Vagina (tissue), 2 donors: ENCODE measurements at regions of chr1 and their contacts with region 1.

Region 1: DNA sequence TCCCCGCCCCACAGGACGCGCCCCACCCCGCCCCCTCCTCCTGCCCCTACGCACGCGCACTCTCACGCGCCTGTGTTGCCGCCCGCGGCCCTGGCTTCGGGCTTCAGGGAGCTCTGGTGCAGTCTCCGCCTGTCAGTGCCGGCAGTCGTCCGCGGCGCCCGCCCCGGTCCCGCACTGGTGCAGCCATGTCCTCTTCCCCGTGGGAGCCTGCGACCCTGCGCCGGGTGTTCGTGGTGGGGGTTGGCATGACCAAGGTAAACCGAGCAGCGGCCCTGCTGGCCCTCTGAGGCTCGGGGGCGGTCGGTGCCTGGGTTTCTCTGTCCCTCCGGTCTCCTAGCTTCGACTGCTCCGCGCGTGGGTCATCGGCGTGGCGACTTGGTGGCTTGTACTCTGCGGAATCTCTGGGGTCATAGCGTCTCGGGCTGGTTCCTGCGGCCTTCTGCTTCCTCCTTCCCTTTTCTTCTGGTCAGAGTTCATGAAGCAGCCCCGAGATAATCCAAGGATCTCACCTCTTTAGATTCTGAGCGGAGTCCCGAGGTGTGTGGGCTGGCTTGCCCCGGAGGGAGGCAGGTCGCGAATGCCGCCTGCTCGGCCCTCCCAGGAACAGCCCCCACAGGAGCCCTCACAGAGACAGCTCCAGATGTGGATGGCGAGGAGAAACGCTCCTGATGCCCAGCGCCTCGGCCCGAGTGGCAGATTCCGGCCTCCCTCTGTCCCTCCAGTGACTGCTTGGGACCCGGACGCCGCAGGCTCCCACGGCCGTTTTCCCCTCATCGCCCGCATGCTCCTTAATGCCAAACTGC is at the start of gene SCP2:
- DNase-seq: no peak
- H3K4me3 ChIP-seq: peak within 1 kb of the TSS; percentile 67 to 78
- H3K27ac ChIP-seq: peak within 1 kb of the TSS; percentile 70
- H3K4me1 ChIP-seq: peaks cover 20% of the 10 kb centered on the region
- H3K27me3 ChIP-seq: no peaks in the 10 kb centered on the region
- CTCF ChIP-seq: no peak
- POLR2A ChIP-seq: peak in 1 of 2 donors; percentile 66
- total RNA-seq, gene SCP2: 61.9 TPM

Region 2: GRCh38 chr1:52702886-52703787 is 224.3 kb before region 1 on chr1:
- intact Hi-C with region 1: loop called (anchors 5 kb)
- DNase-seq: peak; percentile 96
- H3K4me3 ChIP-seq: peak overlapping the region; percentile 53
- H3K27ac ChIP-seq: peak overlapping the region; percentile 67
- H3K4me1 ChIP-seq: peaks cover 7% of the 10 kb centered on the region
- H3K27me3 ChIP-seq: no peaks in the 10 kb centered on the region
- CTCF ChIP-seq: no peak
- POLR2A ChIP-seq: no peak

Region 3: DNA sequence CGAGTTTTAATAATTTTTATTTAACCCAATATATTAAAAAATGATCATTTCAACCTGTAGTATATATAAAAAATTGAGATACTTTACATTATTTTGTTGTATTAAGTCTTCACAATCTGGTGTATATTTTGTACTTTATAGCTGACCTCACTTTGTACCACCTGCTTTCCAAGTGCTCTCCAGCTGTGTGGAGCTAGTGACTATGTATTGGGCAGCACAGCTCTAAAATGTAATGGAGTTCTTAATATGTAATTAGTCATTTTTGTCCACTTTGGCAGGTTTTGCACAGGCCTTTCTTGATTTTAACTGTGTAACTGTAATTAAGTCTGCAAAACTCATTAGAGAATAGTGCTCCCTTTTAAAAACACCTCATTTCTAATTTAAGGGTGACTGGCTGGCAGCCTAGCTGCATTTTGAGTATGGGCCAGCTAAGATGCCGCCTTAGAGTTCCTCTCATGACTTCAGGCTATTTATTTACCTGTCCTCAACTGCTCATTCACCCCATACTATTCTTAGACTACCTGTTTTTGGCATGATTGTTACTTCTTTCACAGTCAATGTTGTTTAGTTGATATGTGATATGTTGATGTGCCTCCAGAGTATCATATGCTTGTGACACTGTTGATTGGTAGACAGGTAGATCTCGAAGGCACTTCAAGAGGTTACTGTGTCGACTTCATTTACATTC is 157.9 kb before region 1 on chr1:
- intact Hi-C with region 1: no loop called
- DNase-seq: no peak
- H3K4me3 ChIP-seq: no peak overlapping the region
- H3K27ac ChIP-seq: no peak overlapping the region
- H3K4me1 ChIP-seq: peaks cover 4% of the 10 kb centered on the region
- H3K27me3 ChIP-seq: no peaks in the 10 kb centered on the region
- CTCF ChIP-seq: no peak
- POLR2A ChIP-seq: no peak

Region 4: GRCh38 chr1:52892424-52893215 is 34.8 kb before region 1 on chr1:
- intact Hi-C with region 1: no loop called
- DNase-seq: no peak
- H3K4me3 ChIP-seq: no peak overlapping the region
- H3K27ac ChIP-seq: no peak overlapping the region
- H3K4me1 ChIP-seq: no peaks in the 10 kb centered on the region
- H3K27me3 ChIP-seq: no peaks in the 10 kb centered on the region
- CTCF ChIP-seq: no peak
- POLR2A ChIP-seq: no peak

Region 5: DNA sequence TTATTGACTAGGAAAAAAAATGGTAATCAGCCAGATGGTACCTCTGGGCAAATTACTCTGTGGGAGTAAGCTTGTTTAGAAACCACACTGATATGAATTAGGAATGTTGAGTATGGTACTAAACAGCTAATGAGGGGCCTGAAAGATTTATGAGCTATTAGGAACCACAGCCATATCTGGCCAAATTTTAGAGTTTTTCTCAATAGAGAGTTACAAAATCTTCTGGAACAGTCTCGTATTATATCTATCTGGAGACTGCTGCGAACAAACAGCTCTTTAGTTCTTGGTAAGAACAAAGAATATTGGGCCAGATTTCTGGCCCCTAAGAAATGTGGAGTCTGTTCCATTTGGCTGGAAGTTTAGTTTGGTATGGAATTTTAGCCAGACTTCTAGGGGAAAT is 129.7 kb after region 1 on chr1:
- intact Hi-C with region 1: loop called (anchors 10 kb)
- DNase-seq: no peak
- H3K4me3 ChIP-seq: no peak overlapping the region
- H3K27ac ChIP-seq: peak overlapping the region; percentile 67
- H3K4me1 ChIP-seq: peaks cover 35% of the 10 kb centered on the region
- H3K27me3 ChIP-seq: no peaks in the 10 kb centered on the region
- CTCF ChIP-seq: no peak
- POLR2A ChIP-seq: no peak